ENCODE measurements at regions of chr3 and their contacts with region 1.

Region 1: GRCh38 chr3:116663161-116664110 is 46.1 kb upstream of the TUSC7 start:
- DNase-seq: no peak
- ATAC-seq: no peak
- H3K4me3 ChIP-seq: no peak overlapping the region
- H3K27ac ChIP-seq: no peak overlapping the region
- H3K4me1 ChIP-seq: no peaks in the 10 kb centered on the region
- H3K27me3 ChIP-seq: no peaks in the 10 kb centered on the region
- CTCF ChIP-seq: no peak

Region 2: DNA sequence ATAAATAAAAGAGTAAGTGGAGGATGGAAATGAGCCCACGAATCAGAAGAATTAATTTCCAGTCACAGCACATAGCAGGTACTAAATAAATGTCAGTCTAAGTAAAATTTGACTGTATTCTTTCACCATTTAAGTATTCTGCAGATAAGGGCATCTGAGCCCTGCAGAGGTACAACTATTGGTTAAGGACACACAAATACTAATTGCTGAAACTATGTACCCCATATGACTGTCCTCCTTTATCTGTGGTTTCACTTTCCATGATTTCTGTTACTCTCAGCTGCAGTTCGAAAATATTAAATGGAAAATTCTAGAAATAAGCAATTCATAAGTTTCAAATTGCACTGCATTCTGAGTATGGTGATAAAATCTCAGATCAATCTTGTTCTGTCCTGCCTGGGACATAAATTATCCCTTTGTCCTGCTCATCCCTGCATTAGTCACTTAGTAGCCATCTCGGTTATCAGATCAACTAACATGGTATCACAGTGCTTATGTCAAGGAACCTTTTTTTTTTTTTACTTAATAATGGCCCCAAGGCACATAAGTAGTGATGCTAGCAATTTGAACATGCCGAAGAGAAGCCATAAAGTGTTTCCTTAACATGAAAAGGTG is 313.2 kb before region 1 on chr3:
- intact Hi-C with region 1: loop called in 1 of 2 experiments (anchors 10 kb)
- DNase-seq: no peak
- ATAC-seq: no peak
- H3K4me3 ChIP-seq: no peak overlapping the region
- H3K27ac ChIP-seq: no peak overlapping the region
- H3K4me1 ChIP-seq: no peaks in the 10 kb centered on the region
- H3K27me3 ChIP-seq: no peaks in the 10 kb centered on the region
- CTCF ChIP-seq: no peak

Measured in psoas muscle (tissue), 8 donors.